ENCODE measurements at regions of chr11 and their contacts with region 1.

Region 1: DNA sequence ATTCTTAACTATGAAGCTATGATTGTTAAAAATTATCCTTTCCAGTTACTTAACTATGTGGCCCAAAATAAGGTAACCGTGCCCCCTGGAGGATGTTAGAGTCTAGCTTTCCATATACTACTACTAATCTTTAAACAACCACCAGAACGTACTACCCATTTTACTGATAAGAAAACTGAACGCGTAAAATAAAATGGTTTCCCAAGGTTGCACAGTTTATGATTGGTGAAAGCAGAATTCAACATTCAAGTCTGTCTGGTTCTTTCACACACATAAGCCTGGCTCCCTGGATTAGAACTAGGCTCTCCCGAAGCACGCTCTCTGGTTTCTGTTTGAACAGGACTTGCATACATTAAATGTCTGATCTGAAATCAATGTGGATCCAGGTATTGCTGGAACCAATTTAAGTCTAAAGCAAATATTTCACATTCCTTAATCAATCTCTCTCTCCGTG is 437.9 kb upstream of the CCDC90B start:
- DNase-seq: no peak

Region 2: GRCh38 chr11:83292709-83293456 is 431.2 kb before region 1 on chr11:
- intact Hi-C with region 1: loop called in 1 of 2 experiments (anchors 10 kb)
- DNase-seq: no peak

Region 3: GRCh38 chr11:84573868-84574267 is 849.8 kb after region 1 on chr11:
- intact Hi-C with region 1: no loop called
- DNase-seq: no peak

Measured in posterior vena cava (tissue), 2 donors.